ENCODE measurements at regions of chr14 and their contacts with region 1.

Region 1: DNA sequence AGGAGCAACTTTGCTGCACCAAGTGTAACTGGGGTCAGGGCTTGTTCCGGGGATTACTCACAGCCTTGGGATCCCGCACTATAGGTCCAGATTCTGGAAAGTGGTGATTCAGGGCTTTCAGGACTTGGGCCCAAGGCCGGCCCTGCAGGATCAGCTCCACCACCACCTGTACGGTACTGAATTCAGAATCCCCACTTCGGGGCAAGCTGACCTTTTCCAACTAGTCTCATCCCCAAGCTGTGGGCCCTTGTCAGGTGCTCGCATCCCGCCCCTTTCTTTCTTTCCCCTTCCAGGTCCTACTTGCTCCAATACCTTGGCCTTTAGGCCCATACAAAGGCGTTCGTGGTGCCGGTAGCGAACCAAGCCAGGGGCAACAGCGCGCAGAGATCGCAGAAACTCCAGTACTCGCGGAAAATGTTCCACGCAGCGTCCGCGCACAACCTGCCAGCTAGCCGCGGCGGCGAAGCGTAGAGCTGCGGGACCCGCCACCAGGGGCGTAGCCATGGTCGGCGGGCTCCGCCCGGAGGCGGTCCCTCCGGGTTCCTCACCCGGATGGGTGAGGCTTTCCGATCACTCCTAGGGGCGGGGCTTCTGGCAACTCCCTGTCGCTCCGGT is 487 bp downstream of the TINF2 start:
- DNase-seq: peak; percentile 88
- H3K4me3 ChIP-seq: peak overlapping the region; percentile 58 to 76 (median 66)
- H3K27ac ChIP-seq: peak overlapping the region; percentile 97 to 99 (median 98)
- H3K4me1 ChIP-seq: peaks cover 14 to 56% (median 28%) of the 10 kb centered on the region in 3 donors
- H3K27me3 ChIP-seq: no peaks in the 10 kb centered on the region
- CTCF ChIP-seq: peak; percentile 49 to 91 (median 79)
- POLR2A ChIP-seq: no peak

Region 2: GRCh38 chr14:24299255-24300195 is 57.6 kb after region 1 on chr14 and contains the starts of genes DHRS1 and NOP9:
- intact Hi-C with region 1: loop called (anchors 2 kb)
- DNase-seq: peak; percentile 71
- H3K4me3 ChIP-seq: peak within 1 kb of the TSS; percentile 60 to 92 (median 87)
- H3K27ac ChIP-seq: peak within 1 kb of the TSS; percentile 94 to 97 (median 96)
- H3K4me1 ChIP-seq: peaks cover 20 to 59% (median 25%) of the 10 kb centered on the region in 3 donors
- H3K27me3 ChIP-seq: no peaks in the 10 kb centered on the region
- CTCF ChIP-seq: peak in 2 of 6 experiments; percentile 18 to 30
- POLR2A ChIP-seq: peak in 3 of 4 donors; percentile 73 to 78 (median 78)
- total RNA-seq, gene DHRS1: 81.6 to 164 (median 101) TPM
- total RNA-seq, gene NOP9: 18.0 to 29.8 (median 25.0) TPM

Region 3: GRCh38 chr14:24595073-24595808 is 353.3 kb after region 1 on chr14:
- intact Hi-C with region 1: no loop called
- DNase-seq: no peak
- H3K4me3 ChIP-seq: peak overlapping the region in 1 of 4 donors; percentile 12
- H3K27ac ChIP-seq: peak overlapping the region in 1 of 4 donors; percentile 34
- H3K4me1 ChIP-seq: peaks cover 0 to 7% (median 0%) of the 10 kb centered on the region in 3 donors
- H3K27me3 ChIP-seq: no peaks in the 10 kb centered on the region
- CTCF ChIP-seq: no peak
- POLR2A ChIP-seq: no peak